Activated CD4-positive, alpha-beta T cell treated with anti-CD3 and anti-CD28 coated beads, Interleukin-2, amount 10 ng/mL, durations not matched to agents 24 days and 14 days (primary cell): ENCODE measurements at regions of chr6 and their contacts with region 1.

Region 1: DNA sequence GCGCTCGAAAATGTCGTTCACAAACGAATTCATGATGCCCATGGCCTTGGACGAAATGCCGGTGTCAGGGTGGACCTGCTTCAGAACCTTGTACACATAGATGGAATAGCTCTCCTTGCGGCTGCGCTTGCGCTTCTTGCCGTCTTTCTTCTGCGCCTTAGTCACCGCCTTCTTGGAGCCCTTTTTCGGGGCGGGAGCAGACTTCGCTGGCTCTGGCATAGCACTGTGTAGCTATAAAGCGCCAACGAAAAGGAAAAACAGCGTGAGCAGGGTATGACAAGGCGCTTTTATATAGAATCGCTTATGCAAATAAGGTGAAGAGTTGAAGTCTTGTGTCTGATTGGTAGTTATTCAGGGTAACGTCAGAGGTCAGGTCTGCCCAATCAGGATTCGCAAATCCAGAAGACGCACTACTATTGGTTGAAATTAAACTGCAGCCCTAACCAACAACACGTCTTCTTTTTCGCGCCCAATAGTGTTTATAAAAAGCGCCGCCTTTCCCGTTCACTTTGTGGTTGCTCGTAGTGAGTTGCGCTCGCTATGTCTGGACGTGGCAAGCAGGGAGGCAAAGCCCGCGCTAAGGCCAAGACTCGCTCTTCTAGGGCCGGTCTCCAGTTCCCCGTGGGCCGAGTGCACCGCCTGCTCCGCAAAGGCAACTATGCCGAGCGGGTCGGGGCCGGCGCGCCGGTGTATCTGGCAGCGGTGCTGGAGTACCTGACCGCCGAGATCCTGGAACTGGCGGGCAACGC is 114.8 kb upstream of the PRSS16 start:
- DNase-seq: peak; percentile 98
- H3K4me3 Mint-ChIP-seq: no peak overlapping the region
- H3K27ac Mint-ChIP-seq: no peak overlapping the region
- H3K4me1 Mint-ChIP-seq: peaks cover 37% of the 10 kb centered on the region
- H3K27me3 Mint-ChIP-seq: no peaks in the 10 kb centered on the region

Region 2: GRCh38 chr6:27177485-27178406 is 45.0 kb after region 1 on chr6:
- intact Hi-C with region 1: loop called (anchors 2 kb)
- DNase-seq: peak; percentile 92
- H3K4me3 Mint-ChIP-seq: peak overlapping the region; percentile 95
- H3K27ac Mint-ChIP-seq: peak overlapping the region; percentile 93
- H3K4me1 Mint-ChIP-seq: peaks cover 17% of the 10 kb centered on the region
- H3K27me3 Mint-ChIP-seq: peaks cover 33% of the 10 kb centered on the region

Region 3: GRCh38 chr6:27871924-27872638 is 739.4 kb after region 1 on chr6:
- intact Hi-C with region 1: loop called (anchors 2 kb)
- DNase-seq: peak; percentile 97
- H3K4me3 Mint-ChIP-seq: peak overlapping the region; percentile 92
- H3K27ac Mint-ChIP-seq: peak overlapping the region; percentile 96
- H3K4me1 Mint-ChIP-seq: peaks cover 56% of the 10 kb centered on the region
- H3K27me3 Mint-ChIP-seq: peaks cover 2% of the 10 kb centered on the region